CD4-positive, alpha-beta T cell (primary cell): ENCODE measurements at regions of chr4 and their contacts with region 1.

Region 1: DNA sequence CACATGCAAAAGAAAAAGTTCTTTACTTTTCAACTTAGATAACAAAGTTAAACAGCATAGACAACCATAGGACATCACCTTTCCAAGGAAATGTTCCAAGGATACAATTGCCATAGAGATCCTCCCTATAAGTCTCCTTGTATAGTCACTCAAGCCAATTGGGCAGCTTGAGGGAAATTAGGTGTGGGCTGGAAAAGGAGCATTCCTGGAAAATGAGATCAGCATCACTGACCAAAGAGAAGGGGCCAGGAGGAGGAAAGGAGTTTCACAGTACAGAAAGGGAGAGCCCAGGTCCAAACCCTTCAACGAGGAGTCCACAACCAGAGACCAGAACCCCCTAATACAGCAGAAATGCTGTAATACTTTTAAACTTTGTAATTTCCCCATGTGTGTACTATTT is 91.5 kb upstream of the PPARGC1A start:
- DNase-seq: no peak
- ATAC-seq: no peak
- H3K4me3 ChIP-seq: no peak overlapping the region
- H3K4me3 Mint-ChIP-seq: no peak overlapping the region
- H3K27ac ChIP-seq: no peak overlapping the region
- H3K27ac Mint-ChIP-seq: no peak overlapping the region
- H3K4me1 ChIP-seq: no peaks in the 10 kb centered on the region
- H3K4me1 Mint-ChIP-seq: no peaks in the 10 kb centered on the region
- H3K27me3 ChIP-seq: no peaks in the 10 kb centered on the region
- H3K27me3 Mint-ChIP-seq: no peaks in the 10 kb centered on the region
- CTCF ChIP-seq: no peak

Region 2: GRCh38 chr4:24007860-24008261 is 26.5 kb after region 1 on chr4:
- CTCF ChIA-PET with region 1: no interaction called
- POLR2A ChIA-PET with region 1: no interaction called
- intact Hi-C with region 1: loop called in 1 of 2 experiments (anchors 1 kb)
- DNase-seq: no peak
- ATAC-seq: no peak
- H3K4me3 ChIP-seq: no peak overlapping the region
- H3K4me3 Mint-ChIP-seq: no peak overlapping the region
- H3K27ac ChIP-seq: no peak overlapping the region
- H3K27ac Mint-ChIP-seq: no peak overlapping the region
- H3K4me1 ChIP-seq: no peaks in the 10 kb centered on the region
- H3K4me1 Mint-ChIP-seq: no peaks in the 10 kb centered on the region
- H3K27me3 ChIP-seq: no peaks in the 10 kb centered on the region
- H3K27me3 Mint-ChIP-seq: no peaks in the 10 kb centered on the region
- CTCF ChIP-seq: no peak